HEK293T (cell line): ENCODE measurements at regions of chr15 and their contacts with region 1.

Region 1: GRCh38 chr15:45429974-45430792 is 51.8 kb upstream of the GATM start:
- DNase-seq: peak; percentile 77

Region 2: GRCh38 chr15:45268135-45268534 is 162.0 kb before region 1 on chr15:
- CTCF ChIA-PET with region 1: no interaction called
- POLR2A ChIA-PET with region 1: no interaction called
- DNase-seq: peak; percentile 7

Region 3: DNA sequence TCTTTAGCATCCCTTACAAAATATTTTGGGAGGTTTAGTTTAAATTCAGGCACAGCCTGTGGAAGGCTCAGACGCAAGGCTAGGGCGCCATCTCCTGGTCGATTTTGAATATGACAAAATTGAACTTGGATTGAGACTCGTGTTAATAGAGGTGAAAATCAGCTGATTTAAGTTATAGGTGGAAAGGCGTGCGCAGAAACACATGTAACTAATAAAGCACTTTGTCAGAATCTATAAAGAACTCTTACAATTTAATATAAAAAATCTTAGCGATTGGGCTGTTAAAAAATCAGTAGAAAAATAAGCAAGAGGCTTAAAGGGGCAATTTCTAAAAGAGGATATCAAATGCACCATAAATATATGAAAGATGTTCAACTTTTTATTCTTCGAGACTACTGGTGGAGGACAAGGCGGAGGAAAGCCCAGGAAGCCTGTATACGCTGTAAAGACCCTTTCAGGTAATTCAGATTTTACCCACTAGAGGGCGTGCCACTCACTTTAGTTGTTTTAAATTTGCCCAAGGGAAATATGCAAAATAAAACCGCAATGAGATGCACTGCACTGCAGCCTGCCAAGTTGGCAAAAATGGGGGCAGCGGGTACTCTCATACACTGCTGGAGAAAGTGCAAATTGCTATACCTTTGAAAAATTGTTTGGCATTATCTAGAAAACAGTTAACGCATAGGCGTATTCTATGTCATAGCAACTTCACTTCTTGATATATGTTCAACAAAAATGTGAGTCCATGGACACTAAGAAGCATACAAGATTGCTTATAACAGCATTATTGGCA is 27.7 kb after region 1 on chr15:
- CTCF ChIA-PET with region 1: interaction called, 10 read pairs
- POLR2A ChIA-PET with region 1: no interaction called
- DNase-seq: peak; percentile 47